ENCODE measurements at regions of chr6 and their contacts with region 1.

Region 1: GRCh38 chr6:128655978-128656498 is 135.6 kb upstream of the PTPRK start:
- DNase-seq: peak; percentile 19
- ATAC-seq: peak; percentile 94
- H3K4me3 Mint-ChIP-seq: peak overlapping the region; percentile 10
- H3K27ac Mint-ChIP-seq: peak overlapping the region; percentile 88
- H3K4me1 Mint-ChIP-seq: peaks cover 36% of the 10 kb centered on the region
- H3K27me3 Mint-ChIP-seq: peaks cover 2% of the 10 kb centered on the region
- CTCF ChIP-seq: no peak

Region 2: DNA sequence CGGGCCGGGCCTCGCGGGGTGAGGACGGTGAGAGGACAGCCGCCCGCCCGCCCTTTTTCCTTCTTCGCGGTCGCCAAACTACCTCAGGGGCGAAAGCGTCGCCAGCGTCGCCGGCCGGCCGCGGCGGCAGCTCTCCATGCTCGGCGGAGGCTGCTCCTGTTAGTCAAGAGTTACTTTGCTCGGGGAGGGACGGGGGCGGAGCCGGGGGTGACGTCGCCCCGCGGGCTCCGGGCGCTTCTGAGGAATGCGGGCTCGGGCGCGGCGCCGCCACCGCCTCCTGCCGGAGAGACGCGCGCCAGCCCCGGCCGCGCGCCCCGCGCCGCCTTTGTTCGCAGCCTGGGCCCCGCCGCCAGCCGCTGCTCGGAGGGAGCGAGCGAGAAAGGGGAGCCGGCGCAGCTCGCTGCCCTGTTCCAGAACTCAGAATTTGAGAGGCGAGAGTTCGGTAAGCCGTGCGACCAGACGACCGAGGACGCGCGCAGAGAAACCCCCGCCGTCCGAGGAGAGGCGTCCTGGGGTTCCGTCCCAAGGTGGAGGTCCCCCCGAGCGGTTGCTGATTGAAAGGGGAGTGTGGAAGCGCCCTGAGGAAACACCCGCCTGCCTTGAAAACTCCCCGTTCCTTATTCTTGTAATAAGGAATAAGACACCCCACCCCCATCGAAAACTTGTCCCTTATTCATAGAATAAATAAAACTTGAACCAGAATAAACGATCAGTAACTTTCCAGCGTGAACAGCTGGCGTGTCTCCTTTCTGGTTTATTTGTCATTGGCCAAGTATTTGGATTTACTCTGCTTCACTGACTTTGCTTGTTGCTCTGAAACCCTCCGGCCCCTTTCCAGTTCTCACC is 135.4 kb before region 1 on chr6 and contains the start of gene PTPRK:
- CTCF ChIA-PET with region 1: no interaction called
- POLR2A ChIA-PET with region 1: no interaction called
- intact Hi-C with region 1: loop called (anchors 5 kb)
- DNase-seq: peak; percentile 91
- ATAC-seq: peak; percentile 91
- H3K4me3 Mint-ChIP-seq: peak within 1 kb of the TSS; percentile 89
- H3K27ac Mint-ChIP-seq: peak within 1 kb of the TSS; percentile 79
- H3K4me1 Mint-ChIP-seq: peaks cover 19% of the 10 kb centered on the region
- H3K27me3 Mint-ChIP-seq: peaks cover 31% of the 10 kb centered on the region
- CTCF ChIP-seq: peak; percentile 58
- total RNA-seq, gene PTPRK: 7.7 to 8.9 TPM

Region 3: GRCh38 chr6:129513471-129513870 is 857.4 kb after region 1 on chr6:
- CTCF ChIA-PET with region 1: no interaction called
- POLR2A ChIA-PET with region 1: no interaction called
- intact Hi-C with region 1: no loop called
- DNase-seq: no peak
- ATAC-seq: no peak
- H3K4me3 Mint-ChIP-seq: no peak overlapping the region
- H3K27ac Mint-ChIP-seq: no peak overlapping the region
- H3K4me1 Mint-ChIP-seq: peaks cover 4% of the 10 kb centered on the region
- H3K27me3 Mint-ChIP-seq: peaks cover 1% of the 10 kb centered on the region
- CTCF ChIP-seq: no peak

Measured in activated CD8-positive, alpha-beta T cell treated with anti-CD3 and anti-CD28 coated beads for 36 hours (primary cell).